ENCODE measurements at regions of chr16 and their contacts with region 1.

Region 1: GRCh38 chr16:2459647-2460390 is at the start of gene TEDC2:
- DNase-seq: peak; percentile 97
- H3K4me3 ChIP-seq: peak within 1 kb of the TSS; percentile 48 to 57 (median 50)
- H3K27ac ChIP-seq: no peak within 1 kb of the TSS
- H3K4me1 ChIP-seq: peaks cover 10% of the 10 kb centered on the region
- H3K27me3 ChIP-seq: no peaks in the 10 kb centered on the region
- CTCF ChIP-seq: no peak
- POLR2A ChIP-seq: no peak
- total RNA-seq, gene TEDC2: 12.7 and 15.2 TPM in 2 replicates

Region 2: GRCh38 chr16:1991948-1992703 is 467.7 kb before region 1 on chr16:
- CTCF ChIA-PET with region 1: no interaction called
- POLR2A ChIA-PET with region 1: no interaction called
- dilution Hi-C with region 1: no loop called
- intact Hi-C with region 1: no loop called
- DNase-seq: peak; percentile 88
- H3K4me3 ChIP-seq: peak overlapping the region in 1 of 3 experiments; percentile 15
- H3K27ac ChIP-seq: no peak overlapping the region
- H3K4me1 ChIP-seq: peaks cover 7% of the 10 kb centered on the region
- H3K27me3 ChIP-seq: peaks cover 23 to 24% of the 10 kb centered on the region in 2 experiments
- CTCF ChIP-seq: no peak
- POLR2A ChIP-seq: peak; percentile 21

Region 3: DNA sequence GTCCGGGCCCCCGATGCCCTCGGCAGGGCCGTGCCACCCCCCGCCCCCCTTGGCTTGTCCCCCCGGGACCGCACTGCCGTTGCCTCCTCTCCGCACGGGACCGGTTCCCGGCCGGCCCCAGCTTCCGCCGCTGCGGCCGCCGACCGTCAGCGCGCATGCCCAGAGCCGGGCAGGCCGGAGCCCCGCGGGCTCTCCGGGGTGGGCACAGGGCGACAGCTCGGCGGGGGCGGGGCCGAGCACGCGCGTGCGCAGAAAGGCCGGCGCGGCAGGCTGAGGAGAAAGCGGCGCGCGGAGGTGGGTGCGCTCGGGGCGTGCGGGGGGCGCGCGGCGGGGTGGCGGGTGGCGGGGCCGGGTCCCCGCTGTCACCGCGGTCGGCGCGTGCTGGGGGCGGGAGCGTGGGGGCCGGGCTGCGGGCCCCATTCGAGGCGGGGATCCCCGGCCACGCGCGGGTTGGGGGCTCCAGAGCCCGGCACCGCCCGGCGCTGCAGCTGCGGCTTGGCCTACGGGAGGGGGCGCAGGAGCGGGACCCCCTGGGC is 15.1 kb after region 1 on chr16 and contains the start of gene TBC1D24:
- CTCF ChIA-PET with region 1: interaction called, 6 read pairs
- POLR2A ChIA-PET with region 1: no interaction called
- dilution Hi-C with region 1: no loop called
- intact Hi-C with region 1: loop called (anchors 1 kb)
- DNase-seq: peak; percentile 82
- H3K4me3 ChIP-seq: peak within 1 kb of the TSS; percentile 33 to 72 (median 69)
- H3K27ac ChIP-seq: peak within 1 kb of the TSS; percentile 8
- H3K4me1 ChIP-seq: peaks cover 10% of the 10 kb centered on the region
- H3K27me3 ChIP-seq: peaks cover 11 to 19% of the 10 kb centered on the region in 2 experiments
- CTCF ChIP-seq: no peak
- POLR2A ChIP-seq: peak; percentile 92
- total RNA-seq, gene TBC1D24: 17.3 and 22.8 TPM in 2 replicates